Dorsolateral prefrontal cortex (tissue), 120 donors: ENCODE measurements at regions of chr22 and their contacts with region 1.

Region 1: GRCh38 chr22:43826142-43827002 is 14.3 kb upstream of the EFCAB6 start:
- DNase-seq: peak in 2 of 10 donors; percentile 63 to 67
- H3K4me3 ChIP-seq: peak overlapping the region in 6 of 59 donors; percentile 0 to 15 (median 4)
- H3K27ac ChIP-seq: peak overlapping the region in 53 of 59 donors; percentile 1 to 92 (median 72)
- H3K27me3 ChIP-seq: peaks cover 0 to 24% (median 0%) of the 10 kb centered on the region in 45 donors
- CTCF ChIP-seq: peak in 53 of 56 donors; percentile 26 to 68 (median 53)

Region 2: GRCh38 chr22:43273902-43274484 is 552.4 kb before region 1 on chr22:
- intact Hi-C with region 1: loop called in 1 of 2 experiments (anchors 5 kb)
- DNase-seq: peak in 5 of 10 donors; percentile 10 to 58 (median 26)
- H3K4me3 ChIP-seq: no peak overlapping the region
- H3K27ac ChIP-seq: no peak overlapping the region
- H3K27me3 ChIP-seq: peaks cover 0 to 6% (median 0%) of the 10 kb centered on the region in 45 donors
- CTCF ChIP-seq: peak; percentile 37 to 81 (median 71)

Region 3: DNA sequence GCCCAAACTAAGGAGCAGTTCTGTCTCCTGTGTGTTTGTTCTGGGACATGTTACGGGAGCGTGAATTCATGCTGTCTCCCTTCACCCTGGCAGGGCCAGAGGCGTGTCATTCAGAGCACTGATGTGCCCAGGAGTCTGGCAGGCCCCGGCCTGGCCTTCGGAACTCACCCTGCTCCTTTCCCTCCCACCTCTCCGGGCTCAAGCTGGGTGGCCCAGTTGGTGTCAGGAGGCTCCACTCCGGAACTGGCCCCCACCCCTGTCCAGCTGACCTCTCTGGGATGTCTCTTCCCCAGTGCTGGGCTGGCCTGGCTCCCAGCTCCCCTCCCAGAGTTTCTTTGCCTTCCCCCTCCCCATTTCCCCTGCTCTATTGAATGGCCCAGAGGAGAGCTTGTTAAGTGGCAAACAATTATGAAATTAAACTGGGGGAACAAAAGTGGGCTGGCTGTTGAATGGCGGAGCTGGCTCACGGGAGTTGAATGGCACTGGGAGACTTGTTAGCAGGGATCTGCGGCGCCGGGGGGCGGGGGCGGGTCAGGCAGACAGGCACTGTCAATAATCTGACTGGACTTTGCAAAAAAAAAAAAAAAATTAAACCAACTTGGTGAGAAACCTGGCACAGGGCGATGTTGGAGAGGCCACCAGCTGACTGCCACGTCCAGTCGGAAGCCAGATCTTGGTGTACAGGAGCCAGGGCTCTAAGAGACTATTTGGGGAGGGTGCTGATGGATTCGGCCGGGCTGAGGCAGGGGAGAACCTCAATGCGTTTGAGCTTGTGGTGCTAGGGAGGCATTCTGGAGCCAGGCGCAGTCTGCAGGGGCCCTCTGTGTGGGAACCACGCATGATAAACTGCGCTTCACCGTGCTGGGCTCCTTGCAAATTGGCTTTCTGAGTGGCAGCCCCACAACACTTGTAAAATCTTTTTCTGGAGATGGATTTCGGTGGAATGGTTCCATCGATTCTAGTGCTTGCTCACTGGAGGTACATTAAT is 413.3 kb before region 1 on chr22:
- intact Hi-C with region 1: loop called in 1 of 2 experiments (anchors 10 kb)
- DNase-seq: peak in 1 of 10 donors; percentile 28
- H3K4me3 ChIP-seq: peak overlapping the region in 58 of 59 donors; percentile 15 to 69 (median 54)
- H3K27ac ChIP-seq: peak overlapping the region in 57 of 59 donors; percentile 5 to 95 (median 74)
- H3K27me3 ChIP-seq: peaks cover 0 to 45% (median 3%) of the 10 kb centered on the region in 45 donors
- CTCF ChIP-seq: no peak

Region 4: DNA sequence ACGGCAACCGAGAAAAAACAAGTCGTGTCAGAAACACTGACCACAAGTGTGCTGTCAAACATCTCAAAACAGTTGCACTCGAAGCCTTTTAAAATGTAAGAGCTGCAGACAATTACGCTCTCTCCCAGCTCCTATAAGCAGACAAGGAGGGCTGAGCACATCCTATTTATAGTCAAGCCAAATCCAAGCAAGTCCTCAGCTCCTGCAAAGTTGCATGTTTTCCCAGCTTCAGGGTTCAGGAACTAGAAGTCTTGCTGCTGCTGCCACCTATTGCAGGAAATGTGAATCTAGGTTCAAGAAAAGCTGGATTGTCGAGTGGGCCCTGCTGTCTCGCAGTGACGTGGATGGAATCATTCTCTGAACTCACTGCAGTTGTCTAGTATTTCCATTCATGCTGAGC is 29.8 kb before region 1 on chr22:
- intact Hi-C with region 1: no loop called
- DNase-seq: peak in 5 of 10 donors; percentile 10 to 73 (median 51)
- H3K4me3 ChIP-seq: no peak overlapping the region
- H3K27ac ChIP-seq: peak overlapping the region in 44 of 59 donors; percentile 7 to 84 (median 66)
- H3K27me3 ChIP-seq: no peaks in the 10 kb centered on the region
- CTCF ChIP-seq: peak in 55 of 56 donors; percentile 15 to 71 (median 59)